Activated T-helper 1 cell treated with anti-CD3 and anti-CD28 coated beads, Interleukin-12 subunit alpha, Interleukin-12 subunit beta, Interleukin-2, Interleukin-4 antibody, amounts not matched to agents 30 ng/mL and 10 ng/mL and 1 ng/mL, durations not matched to agents 14 hours and 24 hours and 36 hours (primary cell): ENCODE measurements at regions of chr6 and their contacts with region 1.

Region 1: DNA sequence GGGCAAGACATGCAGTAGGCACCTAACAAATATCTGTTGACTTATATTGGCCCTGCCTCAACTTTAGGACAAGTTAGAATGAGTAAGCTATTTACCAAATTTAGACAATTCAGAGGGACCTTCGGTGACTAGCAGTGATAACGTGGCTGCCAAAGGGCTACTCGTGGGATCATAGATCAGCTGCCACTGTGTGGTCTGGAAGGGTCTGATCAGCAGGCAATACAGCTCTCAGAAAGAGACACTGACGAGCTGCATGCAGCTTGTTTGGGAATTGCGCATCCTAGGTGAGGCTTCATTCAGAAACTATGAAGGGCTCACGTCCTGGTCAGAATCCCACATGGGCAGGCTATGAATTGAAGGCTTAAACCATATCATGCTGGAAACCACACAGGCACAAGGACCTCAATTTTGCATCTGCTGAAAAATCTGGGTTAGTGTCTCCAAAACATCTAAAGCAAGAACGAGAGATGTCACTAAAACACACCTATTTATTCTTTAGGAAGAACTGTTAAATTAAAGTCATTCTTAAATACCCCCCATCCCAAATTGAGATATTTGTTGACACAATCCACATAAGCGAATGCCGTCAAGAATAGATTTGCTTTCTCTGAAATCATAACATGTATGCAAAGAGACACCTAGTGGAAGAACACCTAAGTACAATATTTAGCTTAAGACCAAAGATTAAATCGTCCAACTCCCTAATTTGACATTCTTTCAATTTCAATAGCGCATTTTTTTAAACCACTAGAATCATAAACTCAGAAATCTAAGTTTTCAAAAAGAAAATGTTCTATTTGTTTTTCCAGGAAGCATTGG is 79.6 kb downstream of the IPCEF1 start:
- DNase-seq: no peak
- H3K4me3 Mint-ChIP-seq: peak overlapping the region; percentile 65
- H3K27ac Mint-ChIP-seq: peak overlapping the region; percentile 74
- H3K4me1 Mint-ChIP-seq: peaks cover 23% of the 10 kb centered on the region
- H3K27me3 Mint-ChIP-seq: peaks cover 18% of the 10 kb centered on the region

Region 2: DNA sequence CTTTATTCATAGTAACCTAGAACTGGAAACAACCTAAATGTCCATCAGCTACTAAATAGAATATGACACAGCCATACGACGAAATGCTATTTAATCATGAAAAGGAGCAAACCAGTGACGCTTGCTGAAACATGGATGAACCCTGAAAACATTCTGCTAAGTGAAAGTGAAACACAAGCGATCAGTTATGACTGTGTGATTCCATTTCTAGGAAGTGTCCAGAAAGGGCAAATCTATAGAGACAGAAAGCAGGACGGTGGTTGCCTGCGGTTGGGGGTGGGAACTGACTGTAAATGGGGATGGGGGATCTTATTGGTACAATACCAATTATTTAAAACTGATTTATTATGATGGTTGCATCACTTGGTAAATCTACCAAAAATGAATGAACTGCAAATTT is 47.2 kb before region 1 on chr6:
- intact Hi-C with region 1: loop called (anchors 1 kb)
- DNase-seq: peak; percentile 49
- H3K4me3 Mint-ChIP-seq: peak overlapping the region; percentile 46
- H3K27ac Mint-ChIP-seq: peak overlapping the region; percentile 47
- H3K4me1 Mint-ChIP-seq: peaks cover 57% of the 10 kb centered on the region
- H3K27me3 Mint-ChIP-seq: no peaks in the 10 kb centered on the region

Region 3: DNA sequence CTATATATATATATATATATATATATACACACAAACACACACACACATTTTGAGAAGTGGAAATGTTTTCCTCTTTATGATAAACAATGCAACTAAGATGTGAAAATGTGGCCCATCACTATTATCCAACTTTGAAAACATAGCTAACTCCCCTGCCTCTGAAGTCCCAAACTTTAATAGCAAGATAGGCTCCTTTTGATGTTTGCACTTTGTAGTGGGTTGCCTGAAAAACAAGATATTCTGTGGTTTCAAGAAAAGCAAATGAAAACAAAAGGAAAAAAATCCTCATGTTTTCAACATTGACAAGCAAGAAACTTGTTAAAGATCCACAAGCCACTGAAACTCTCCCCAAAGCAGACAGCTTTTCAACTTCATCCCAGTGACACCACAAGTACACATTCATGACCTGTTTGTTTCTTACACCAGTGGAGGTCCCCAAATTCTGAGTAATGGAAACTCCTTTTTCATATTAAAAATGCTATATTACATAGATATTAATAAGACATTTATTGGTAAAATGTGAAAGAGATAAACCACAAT is 10.4 kb before region 1 on chr6:
- intact Hi-C with region 1: loop called (anchors 1 kb)
- DNase-seq: no peak
- H3K4me3 Mint-ChIP-seq: no peak overlapping the region
- H3K27ac Mint-ChIP-seq: peak overlapping the region; percentile 79
- H3K4me1 Mint-ChIP-seq: peaks cover 22% of the 10 kb centered on the region
- H3K27me3 Mint-ChIP-seq: peaks cover 5% of the 10 kb centered on the region

Region 4: GRCh38 chr6:154329350-154330170 is 52.5 kb after region 1 on chr6:
- intact Hi-C with region 1: no loop called
- DNase-seq: no peak
- H3K4me3 Mint-ChIP-seq: no peak overlapping the region
- H3K27ac Mint-ChIP-seq: no peak overlapping the region
- H3K4me1 Mint-ChIP-seq: no peaks in the 10 kb centered on the region
- H3K27me3 Mint-ChIP-seq: peaks cover 7% of the 10 kb centered on the region

Region 5: DNA sequence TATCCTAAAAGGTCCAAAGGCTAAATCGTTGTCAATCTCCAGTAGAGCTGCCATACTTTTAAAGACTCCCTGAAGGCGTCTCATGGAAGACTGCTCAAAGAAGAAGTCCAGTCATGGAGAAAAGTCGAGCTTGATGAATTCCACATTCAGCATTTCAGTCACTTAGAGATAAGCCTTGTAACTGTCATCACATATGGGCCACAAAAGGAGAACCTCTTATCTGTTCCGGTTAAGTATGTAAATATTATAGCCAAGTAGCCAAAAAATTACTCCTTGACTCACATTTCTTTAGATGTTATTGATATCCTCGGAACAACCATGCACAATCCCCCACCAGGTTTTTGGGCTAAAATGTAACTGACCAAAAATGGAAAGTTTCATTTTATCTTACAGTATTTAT is 243.3 kb after region 1 on chr6:
- intact Hi-C with region 1: no loop called
- DNase-seq: no peak
- H3K4me3 Mint-ChIP-seq: no peak overlapping the region
- H3K27ac Mint-ChIP-seq: no peak overlapping the region
- H3K4me1 Mint-ChIP-seq: no peaks in the 10 kb centered on the region
- H3K27me3 Mint-ChIP-seq: peaks cover 1% of the 10 kb centered on the region

Region 6: DNA sequence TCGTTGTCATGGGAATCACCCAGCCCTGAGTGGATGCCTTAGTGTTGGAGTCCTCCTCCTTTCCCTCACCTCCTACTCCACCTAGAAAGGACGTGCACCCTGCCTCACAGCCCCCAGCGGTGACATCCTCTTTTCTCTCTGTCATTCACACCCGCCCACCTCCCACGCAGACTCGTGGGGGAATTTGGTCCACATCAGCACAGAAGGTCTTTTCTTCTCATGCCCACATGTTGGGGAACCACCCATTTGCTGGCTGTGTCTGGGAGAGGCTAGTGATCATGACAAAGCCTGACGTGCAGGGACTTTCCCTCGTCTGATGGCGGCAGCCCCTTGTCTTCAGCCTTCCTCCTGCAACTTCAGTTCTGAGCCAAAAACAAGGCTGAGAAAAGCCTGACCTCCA is 329.4 kb after region 1 on chr6:
- intact Hi-C with region 1: loop called (anchors 5 kb)
- DNase-seq: peak; percentile 66
- H3K4me3 Mint-ChIP-seq: peak overlapping the region; percentile 65
- H3K27ac Mint-ChIP-seq: peak overlapping the region; percentile 86
- H3K4me1 Mint-ChIP-seq: peaks cover 24% of the 10 kb centered on the region
- H3K27me3 Mint-ChIP-seq: peaks cover 3% of the 10 kb centered on the region